WTC11 (cell line): ENCODE measurements at regions of chr18 and their contacts with region 1.

Region 1: DNA sequence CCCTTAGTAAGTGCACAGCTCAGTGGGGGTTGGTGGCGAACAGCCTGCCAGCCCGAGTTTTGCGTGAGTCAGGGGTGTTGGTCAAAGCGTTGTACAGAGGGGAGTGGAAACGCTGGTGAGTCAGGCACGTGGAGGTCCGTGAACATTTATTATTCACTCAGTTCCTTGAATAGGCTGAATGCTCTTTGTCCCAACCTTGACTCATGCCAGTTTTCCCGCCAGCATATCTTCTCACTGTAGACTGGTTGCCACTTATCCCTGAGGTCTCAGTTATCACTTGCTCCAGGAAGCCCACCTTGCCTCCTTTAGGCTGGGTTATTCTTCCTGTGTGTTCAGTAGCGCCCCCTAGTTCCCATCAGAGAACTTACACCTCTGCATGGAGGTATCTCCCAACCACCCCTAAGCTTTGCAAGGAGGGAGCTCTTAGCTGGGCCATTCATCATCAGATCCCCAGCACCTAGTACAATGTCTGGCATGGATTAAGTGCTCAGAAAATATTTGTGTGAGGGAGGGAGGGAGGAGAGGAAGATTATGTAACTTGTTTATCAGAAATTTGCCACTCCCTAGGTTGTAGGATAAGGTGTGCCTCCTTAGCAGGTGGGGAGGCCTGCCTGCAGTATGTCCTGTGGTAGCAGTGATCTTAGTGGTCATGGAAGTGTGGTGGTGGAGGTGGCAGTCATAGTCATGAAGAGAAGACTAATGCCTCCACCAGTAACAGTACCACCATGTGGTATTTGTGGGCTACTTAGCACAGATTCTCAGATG is 72.1 kb downstream of the CABLES1 start:
- DNase-seq: no peak
- ATAC-seq: peak; percentile 91
- H3K4me3 Mint-ChIP-seq: no peak overlapping the region
- H3K27ac Mint-ChIP-seq: peak overlapping the region; percentile 49
- H3K4me1 Mint-ChIP-seq: peaks cover 9% of the 10 kb centered on the region
- H3K27me3 Mint-ChIP-seq: no peaks in the 10 kb centered on the region
- CTCF ChIP-seq: peak; percentile 87

Region 2: GRCh38 chr18:23131693-23132319 is 75.6 kb before region 1 on chr18:
- CTCF ChIA-PET with region 1: interaction called, 76 read pairs
- POLR2A ChIA-PET with region 1: no interaction called
- DNase-seq: peak; percentile 44
- ATAC-seq: no peak
- H3K4me3 Mint-ChIP-seq: no peak overlapping the region
- H3K27ac Mint-ChIP-seq: peak overlapping the region; percentile 50
- H3K4me1 Mint-ChIP-seq: peaks cover 38% of the 10 kb centered on the region
- H3K27me3 Mint-ChIP-seq: no peaks in the 10 kb centered on the region; the same call in 1 of the 2 replicates
- CTCF ChIP-seq: peak; percentile 54

Region 3: GRCh38 chr18:23155537-23155936 is 51.8 kb before region 1 on chr18:
- CTCF ChIA-PET with region 1: interaction called, 12 read pairs
- POLR2A ChIA-PET with region 1: no interaction called
- DNase-seq: no peak
- ATAC-seq: no peak
- H3K4me3 Mint-ChIP-seq: no peak overlapping the region
- H3K27ac Mint-ChIP-seq: peak overlapping the region; percentile 66
- H3K4me1 Mint-ChIP-seq: peaks cover 30% of the 10 kb centered on the region
- H3K27me3 Mint-ChIP-seq: no peaks in the 10 kb centered on the region
- CTCF ChIP-seq: no peak

Region 4: DNA sequence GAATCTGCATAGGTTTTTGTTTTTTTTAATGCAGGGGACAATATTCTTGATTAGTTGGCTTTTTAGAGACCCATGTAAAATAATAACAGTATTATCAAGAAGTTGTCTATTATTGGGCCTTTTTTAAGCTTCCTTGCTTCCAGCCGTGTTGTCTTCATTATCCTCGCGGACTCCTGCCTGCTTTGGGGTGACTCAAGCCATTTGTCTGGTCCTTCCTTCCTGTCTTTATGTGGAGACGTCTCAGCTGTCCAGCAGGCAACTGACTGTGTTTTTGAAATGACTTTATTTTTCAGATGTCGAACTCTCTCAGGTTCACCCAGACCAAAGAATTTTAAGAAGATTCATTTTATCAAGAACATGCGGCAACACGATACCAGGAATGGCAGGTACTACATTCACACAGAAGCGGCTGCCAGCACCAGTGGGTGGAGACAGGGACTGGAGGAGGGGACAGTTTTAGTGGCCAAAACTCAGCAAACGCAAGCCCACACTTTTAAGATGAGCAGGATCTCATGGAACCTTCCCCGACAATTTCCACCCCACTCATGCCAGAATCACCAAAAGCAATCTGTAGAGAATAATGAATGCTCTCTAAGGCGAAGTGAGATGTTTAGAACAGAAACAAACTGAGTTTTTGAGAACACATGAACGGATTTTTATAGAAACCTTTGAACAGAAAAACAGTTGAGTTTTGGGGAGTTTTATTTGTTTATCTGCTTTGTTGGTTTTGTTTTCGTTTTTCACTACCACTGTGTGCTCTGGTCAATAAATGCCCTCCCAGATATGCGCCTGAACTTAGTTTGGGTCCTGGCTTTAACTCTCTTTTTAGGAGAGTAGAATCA is 13.0 kb before region 1 on chr18:
- CTCF ChIA-PET with region 1: interaction called, 66 read pairs
- POLR2A ChIA-PET with region 1: no interaction called
- DNase-seq: no peak
- ATAC-seq: no peak
- H3K4me3 Mint-ChIP-seq: no peak overlapping the region
- H3K27ac Mint-ChIP-seq: peak overlapping the region; percentile 32; the same call in 1 of the 2 replicates
- H3K4me1 Mint-ChIP-seq: peaks cover 40% of the 10 kb centered on the region
- H3K27me3 Mint-ChIP-seq: no peaks in the 10 kb centered on the region
- CTCF ChIP-seq: no peak

Region 5: DNA sequence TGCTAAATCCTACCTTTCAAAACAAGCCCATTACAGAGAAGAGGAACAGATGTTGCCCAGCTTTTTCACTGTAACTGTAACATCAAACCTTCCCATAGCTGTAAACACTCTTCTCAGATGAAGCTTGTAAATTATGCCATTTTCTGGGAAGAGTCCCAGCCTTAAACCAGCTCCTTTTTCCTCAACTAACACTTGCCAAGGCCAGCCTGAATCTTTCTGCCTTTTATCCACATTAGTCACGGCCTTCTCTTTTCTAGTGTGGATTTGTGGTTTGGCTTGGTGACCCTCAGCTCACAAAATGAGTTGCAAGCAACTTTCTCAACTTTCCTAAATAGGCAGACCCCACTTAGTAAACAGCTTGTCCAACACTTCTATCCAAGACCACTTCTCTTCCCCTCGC is 18.1 kb after region 1 on chr18:
- CTCF ChIA-PET with region 1: interaction called, 37 read pairs
- POLR2A ChIA-PET with region 1: no interaction called
- DNase-seq: no peak
- ATAC-seq: no peak
- H3K4me3 Mint-ChIP-seq: no peak overlapping the region
- H3K27ac Mint-ChIP-seq: peak overlapping the region; percentile 5
- H3K4me1 Mint-ChIP-seq: peaks cover 8% of the 10 kb centered on the region
- H3K27me3 Mint-ChIP-seq: no peaks in the 10 kb centered on the region
- CTCF ChIP-seq: no peak